ENCODE measurements at regions of chr21 and their contacts with region 1.

Region 1: DNA sequence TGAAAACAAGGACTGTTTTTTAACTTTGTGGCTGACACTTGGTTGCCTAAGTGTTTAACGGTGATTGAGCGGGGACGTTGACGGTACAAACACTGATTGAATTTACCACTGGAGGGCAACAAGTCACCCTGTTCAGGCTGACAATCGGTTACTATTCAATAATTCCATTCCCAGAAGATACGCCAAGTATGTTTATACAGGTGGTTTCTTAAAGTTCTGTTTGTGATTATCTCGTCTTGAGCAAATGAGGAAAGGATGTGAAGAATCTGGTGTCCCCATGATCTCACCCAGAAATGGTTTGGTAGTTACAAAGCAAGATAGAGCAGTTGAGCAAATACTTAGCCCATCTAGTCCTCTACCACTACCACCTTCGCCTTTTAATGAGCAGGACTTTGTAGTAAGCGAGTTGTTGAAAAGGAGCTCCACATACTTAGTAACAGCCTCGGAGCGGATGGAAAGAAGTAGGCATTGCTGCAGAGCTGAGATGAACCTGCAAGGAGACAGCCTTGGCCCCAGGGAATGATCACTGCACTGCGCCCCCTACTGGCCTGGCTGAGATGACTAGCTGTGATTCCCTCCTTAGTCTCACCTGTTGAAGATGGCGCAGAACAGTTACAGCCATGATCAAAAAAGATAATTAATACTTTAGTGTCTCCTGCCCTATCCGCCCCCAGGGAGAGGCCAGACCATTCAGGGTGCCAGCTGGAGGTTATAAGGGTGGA is 36.3 kb downstream of the IFNAR1 start:
- DNase-seq: peak; percentile 76
- H3K4me3 ChIP-seq: peak overlapping the region; percentile 31
- H3K27ac ChIP-seq: no peak overlapping the region
- H3K4me1 ChIP-seq: peaks cover 15% of the 10 kb centered on the region
- H3K27me3 ChIP-seq: no peaks in the 10 kb centered on the region
- CTCF ChIP-seq: peak; percentile 94

Region 2: DNA sequence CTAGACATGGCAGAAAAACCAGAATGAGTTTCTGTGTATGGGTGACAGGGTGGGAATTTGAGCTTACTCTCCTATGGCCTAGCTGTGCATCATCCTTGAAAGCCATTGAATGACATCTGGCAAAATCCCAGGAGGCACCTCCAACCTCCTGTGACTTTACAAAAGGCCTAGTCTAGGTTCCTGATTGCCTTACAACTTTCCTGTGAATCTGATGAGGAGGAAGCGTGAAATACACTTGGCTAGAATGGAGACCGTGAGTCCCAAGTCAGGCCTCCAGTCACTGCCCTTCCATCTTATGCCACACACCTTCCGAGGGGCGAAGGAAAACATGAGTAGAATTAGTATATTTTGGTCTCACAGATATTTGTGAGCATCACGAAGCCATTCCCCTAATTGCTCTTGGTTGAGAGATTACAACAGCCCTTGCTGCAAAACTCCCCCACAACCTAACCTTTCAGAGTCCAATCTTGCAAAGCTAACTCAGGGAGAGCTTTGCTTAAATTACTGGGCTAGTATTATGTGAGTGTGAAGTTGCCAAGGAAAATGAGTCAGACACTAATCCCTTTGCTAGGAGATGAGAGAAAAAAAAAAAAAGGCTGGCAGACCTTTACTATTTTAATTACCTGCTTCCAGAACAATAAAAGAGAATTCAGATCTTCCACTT is 553.2 kb before region 1 on chr21:
- CTCF ChIA-PET with region 1: interaction called, 16 read pairs
- POLR2A ChIA-PET with region 1: no interaction called
- intact Hi-C with region 1: no loop called
- DNase-seq: peak; percentile 79
- H3K4me3 ChIP-seq: no peak overlapping the region
- H3K27ac ChIP-seq: no peak overlapping the region
- H3K4me1 ChIP-seq: peaks cover 17% of the 10 kb centered on the region
- H3K27me3 ChIP-seq: no peaks in the 10 kb centered on the region
- CTCF ChIP-seq: no peak

Region 3: DNA sequence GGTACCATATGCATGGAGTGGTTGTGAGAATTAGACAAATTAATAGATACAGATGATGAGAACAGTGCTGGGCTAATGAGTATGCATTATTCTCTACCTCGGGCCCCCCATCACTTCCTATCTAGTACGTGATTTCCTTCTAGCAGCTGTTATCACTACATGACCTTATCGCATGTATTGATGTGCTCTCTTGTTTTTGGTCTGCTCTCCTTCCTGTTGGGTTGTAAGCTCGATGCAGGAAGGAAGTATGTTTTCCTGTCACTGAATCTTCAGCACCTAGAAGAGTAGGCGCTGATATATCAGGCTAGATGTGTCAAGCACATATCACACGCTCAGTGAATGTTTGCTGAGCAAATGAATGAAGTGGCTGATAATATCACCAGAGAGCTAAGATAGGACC is 175.2 kb before region 1 on chr21:
- CTCF ChIA-PET with region 1: interaction called, 12 read pairs
- POLR2A ChIA-PET with region 1: no interaction called
- intact Hi-C with region 1: no loop called
- DNase-seq: no peak
- H3K4me3 ChIP-seq: no peak overlapping the region
- H3K27ac ChIP-seq: no peak overlapping the region
- H3K4me1 ChIP-seq: no peaks in the 10 kb centered on the region
- H3K27me3 ChIP-seq: peaks cover 64% of the 10 kb centered on the region
- CTCF ChIP-seq: no peak

Region 4: GRCh38 chr21:33299181-33299752 is 61.8 kb before region 1 on chr21:
- CTCF ChIA-PET with region 1: interaction called, 11 read pairs
- POLR2A ChIA-PET with region 1: no interaction called
- intact Hi-C with region 1: no loop called
- DNase-seq: no peak
- H3K4me3 ChIP-seq: no peak overlapping the region
- H3K27ac ChIP-seq: no peak overlapping the region
- H3K4me1 ChIP-seq: no peaks in the 10 kb centered on the region
- H3K27me3 ChIP-seq: no peaks in the 10 kb centered on the region
- CTCF ChIP-seq: no peak

Region 5: DNA sequence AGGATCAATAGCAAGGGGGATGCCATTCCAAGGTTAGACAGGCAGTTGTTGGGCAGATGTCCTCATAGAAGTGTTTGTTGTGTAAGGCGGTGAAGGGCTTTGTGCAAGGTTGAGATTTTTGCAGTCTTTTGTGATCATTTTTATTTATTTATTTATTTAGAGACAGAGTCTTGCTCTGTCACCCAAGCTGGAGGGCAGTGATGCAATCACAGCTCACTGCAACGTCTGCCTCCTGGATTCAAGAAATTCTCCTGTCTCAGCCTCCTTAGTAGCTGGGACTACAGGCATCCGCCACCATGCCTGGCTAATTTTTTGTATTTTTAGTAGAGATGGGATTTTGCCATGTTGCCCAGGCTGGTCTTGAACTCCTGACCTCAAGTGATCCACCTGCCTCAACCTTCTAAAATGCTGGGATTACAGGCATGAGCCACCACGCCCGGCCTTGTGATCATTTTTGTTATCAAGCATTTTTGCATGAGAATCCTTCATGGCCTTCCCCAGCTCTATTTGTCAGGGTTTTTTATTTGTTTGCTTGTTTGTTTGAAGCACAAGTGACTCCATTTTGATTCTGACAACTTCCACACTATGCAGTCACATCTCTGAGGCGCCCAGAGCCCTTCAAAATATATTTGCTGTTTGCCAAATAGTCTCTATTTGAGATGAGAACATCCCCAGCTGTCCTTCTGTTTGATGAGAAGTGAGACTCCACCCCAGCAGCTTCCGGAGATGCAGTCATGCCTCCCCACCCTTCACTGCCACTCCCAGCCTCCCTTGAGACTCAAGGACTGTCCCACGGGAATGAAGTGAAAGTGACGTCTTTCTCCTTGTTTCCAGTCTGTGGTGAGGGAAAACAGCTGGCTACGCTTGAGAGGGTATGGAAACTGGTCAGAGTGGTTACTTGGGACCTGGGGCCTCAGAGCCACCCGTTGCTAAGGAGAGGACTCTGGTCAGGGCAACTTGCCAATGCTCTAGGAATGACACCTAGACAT is 80.7 kb after region 1 on chr21:
- CTCF ChIA-PET with region 1: interaction called, 19 read pairs
- POLR2A ChIA-PET with region 1: no interaction called
- intact Hi-C with region 1: loop called (anchors 2 kb)
- DNase-seq: peak; percentile 91
- H3K4me3 ChIP-seq: no peak overlapping the region
- H3K27ac ChIP-seq: no peak overlapping the region
- H3K4me1 ChIP-seq: peaks cover 11% of the 10 kb centered on the region
- H3K27me3 ChIP-seq: no peaks in the 10 kb centered on the region
- CTCF ChIP-seq: no peak

Measured in A673 (cell line).